ENCODE measurements at regions of chr2 and their contacts with region 1.

Region 1: DNA sequence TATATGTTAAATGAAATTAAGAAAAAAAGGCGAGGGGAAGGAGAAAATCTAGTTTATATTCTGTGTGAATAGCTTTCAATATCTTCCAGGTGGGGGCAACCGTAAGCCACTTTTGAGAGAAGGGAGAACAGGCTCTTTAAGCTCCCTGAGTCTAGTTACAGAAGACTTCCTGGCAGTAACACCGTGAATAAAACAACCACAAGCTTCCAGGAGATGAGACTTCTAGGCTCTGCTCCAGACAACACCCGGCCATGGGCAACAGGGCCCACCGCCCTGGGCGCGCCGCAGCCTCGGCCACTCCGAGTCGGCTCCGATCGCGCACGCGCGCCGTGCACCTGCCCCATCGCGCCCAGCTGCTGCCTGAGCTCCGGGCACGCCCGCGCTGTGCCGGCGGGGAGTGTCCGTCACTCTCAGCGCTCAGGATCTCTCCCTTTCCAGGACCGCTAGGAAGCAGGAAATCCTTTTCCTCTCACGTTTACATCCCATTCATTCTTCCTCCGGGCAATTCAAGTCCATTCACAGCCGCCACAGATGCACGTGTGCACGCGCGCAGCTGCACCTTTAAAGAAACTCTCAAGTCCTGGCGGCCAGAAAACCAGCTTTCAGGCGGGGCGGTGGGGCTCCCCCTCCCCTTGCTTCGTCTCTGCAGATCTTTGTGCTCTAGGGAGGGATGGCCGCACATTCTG is 19.4 kb upstream of the PAX3 start:
- DNase-seq: peak; percentile 66 to 82
- ATAC-seq: peak; percentile 91 to 96 (median 93)
- H3K4me3 ChIP-seq: peak overlapping the region; percentile 67
- H3K27ac ChIP-seq: peak overlapping the region; percentile 30
- H3K4me1 ChIP-seq: peaks cover 5% of the 10 kb centered on the region
- H3K27me3 ChIP-seq: peaks cover 0 to 17% (median 1%) of the 10 kb centered on the region in 3 donors
- CTCF ChIP-seq: peak; percentile 57

Region 2: GRCh38 chr2:222561817-222562645 is 243.9 kb after region 1 on chr2:
- intact Hi-C with region 1: loop called (anchors 2 to 5 kb)
- DNase-seq: no peak
- ATAC-seq: peak; percentile 51 to 74 (median 64)
- H3K4me3 ChIP-seq: no peak overlapping the region
- H3K27ac ChIP-seq: no peak overlapping the region
- H3K4me1 ChIP-seq: no peaks in the 10 kb centered on the region
- H3K27me3 ChIP-seq: peaks cover 0 to 1% (median 0%) of the 10 kb centered on the region in 3 donors
- CTCF ChIP-seq: peak; percentile 60

Region 3: DNA sequence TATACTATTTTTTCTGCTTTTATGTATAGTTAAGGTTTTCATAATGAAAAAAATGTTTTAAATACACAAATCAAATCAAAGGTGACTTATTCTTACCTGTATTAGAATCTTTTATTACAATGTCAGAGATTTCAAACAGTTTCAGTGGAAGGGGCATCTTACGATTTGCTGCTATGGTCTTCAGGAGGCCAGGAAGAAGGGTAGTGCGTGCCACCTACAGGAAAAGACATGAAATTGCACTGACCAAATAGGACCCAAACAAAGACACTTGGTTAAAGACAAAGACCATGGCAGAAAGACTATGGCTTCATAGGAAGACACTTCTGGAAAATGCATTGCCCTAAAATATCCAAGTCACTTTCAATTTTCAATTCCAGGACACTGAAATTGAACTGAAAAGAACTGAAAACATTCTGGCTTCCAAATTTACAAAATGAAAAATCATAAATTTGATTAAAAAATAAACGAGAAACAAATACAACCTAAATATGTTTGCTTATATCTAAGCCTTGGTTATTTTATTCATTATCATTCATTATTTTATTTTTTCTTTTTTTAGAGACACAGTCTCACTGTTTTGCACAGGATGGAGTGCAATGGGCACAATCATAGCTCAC is 295.7 kb after region 1 on chr2:
- intact Hi-C with region 1: loop called (anchors 5 to 10 kb)
- DNase-seq: no peak
- ATAC-seq: peak; percentile 55 to 85 (median 77)
- H3K4me3 ChIP-seq: no peak overlapping the region
- H3K27ac ChIP-seq: no peak overlapping the region
- H3K4me1 ChIP-seq: no peaks in the 10 kb centered on the region
- H3K27me3 ChIP-seq: no peaks in the 10 kb centered on the region
- CTCF ChIP-seq: peak; percentile 78

Measured in psoas muscle (tissue), 8 donors.